ENCODE measurements at regions of chrX and their contacts with region 1.

Region 1: DNA sequence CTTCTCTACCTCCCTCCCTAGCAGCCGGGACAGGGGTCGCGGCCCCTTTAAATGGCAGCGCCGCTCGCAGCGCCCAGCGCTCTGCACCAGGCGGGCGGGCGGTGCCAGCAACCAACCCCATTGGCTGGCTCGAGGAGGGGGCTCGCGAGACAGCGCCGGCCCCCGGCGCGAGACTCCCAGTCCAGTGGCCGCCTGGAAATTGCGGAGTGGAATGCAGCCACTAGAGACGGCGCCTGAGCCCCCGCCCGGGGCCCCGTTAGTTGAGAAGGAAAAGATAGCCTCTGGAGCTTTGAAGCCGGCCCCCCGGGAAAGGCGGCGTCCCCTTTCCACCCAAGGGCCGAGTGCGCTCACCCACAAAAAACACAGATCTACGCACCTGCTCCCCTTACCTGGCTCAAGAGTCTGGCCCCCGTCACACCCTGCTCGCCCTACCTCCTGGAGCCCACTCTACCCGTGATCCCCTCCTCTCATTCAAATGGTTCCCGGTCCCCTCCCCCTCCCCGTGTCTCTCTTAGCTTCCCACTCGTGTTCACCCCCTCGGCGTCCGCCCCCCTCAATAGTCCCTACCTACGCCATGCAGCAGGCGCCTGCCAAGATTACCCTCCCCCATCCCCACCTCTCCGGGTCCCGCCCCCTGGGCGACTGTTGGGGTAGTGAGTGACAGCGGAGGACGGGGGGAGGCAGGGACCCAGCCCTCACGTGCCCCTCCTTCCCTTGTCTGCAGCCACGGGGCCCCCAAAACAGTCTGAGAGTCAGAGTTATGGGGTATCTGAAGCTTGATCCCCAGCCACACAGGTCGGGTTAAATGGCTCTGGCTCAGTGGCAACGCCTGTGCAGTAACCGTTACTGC is at the start of gene ZMYM3:
- DNase-seq: peak; percentile 64
- ATAC-seq: peak; percentile 85
- H3K4me3 Mint-ChIP-seq: peak within 1 kb of the TSS; percentile 93
- H3K27ac Mint-ChIP-seq: peak within 1 kb of the TSS; percentile 87
- H3K4me1 Mint-ChIP-seq: peaks cover 21% of the 10 kb centered on the region
- H3K27me3 Mint-ChIP-seq: no peaks in the 10 kb centered on the region
- CTCF ChIP-seq: no peak
- total RNA-seq, gene ZMYM3: 27.9 and 28.2 TPM in 2 replicates

Region 2: GRCh38 chrX:71111141-71111843 is 143.0 kb before region 1 on chrX and contains the start of gene IL2RG:
- CTCF ChIA-PET with region 1: no interaction called
- POLR2A ChIA-PET with region 1: interaction called, 11 read pairs
- intact Hi-C with region 1: no loop called
- DNase-seq: peak; percentile 37
- ATAC-seq: peak; percentile 90
- H3K4me3 Mint-ChIP-seq: peak within 1 kb of the TSS; percentile 95
- H3K27ac Mint-ChIP-seq: peak within 1 kb of the TSS; percentile 99
- H3K4me1 Mint-ChIP-seq: peaks cover 67% of the 10 kb centered on the region
- H3K27me3 Mint-ChIP-seq: no peaks in the 10 kb centered on the region
- CTCF ChIP-seq: no peak
- total RNA-seq, gene IL2RG: 261 and 264 TPM in 2 replicates

Region 3: GRCh38 chrX:71198066-71198465 is 56.3 kb before region 1 on chrX:
- CTCF ChIA-PET with region 1: no interaction called
- POLR2A ChIA-PET with region 1: interaction called, 26 read pairs
- intact Hi-C with region 1: loop called (anchors 1 kb)
- DNase-seq: peak; percentile 13
- ATAC-seq: peak; percentile 84
- H3K4me3 Mint-ChIP-seq: peak overlapping the region; percentile 95
- H3K27ac Mint-ChIP-seq: peak overlapping the region; percentile 95
- H3K4me1 Mint-ChIP-seq: peaks cover 32% of the 10 kb centered on the region
- H3K27me3 Mint-ChIP-seq: no peaks in the 10 kb centered on the region
- CTCF ChIP-seq: no peak

Region 4: DNA sequence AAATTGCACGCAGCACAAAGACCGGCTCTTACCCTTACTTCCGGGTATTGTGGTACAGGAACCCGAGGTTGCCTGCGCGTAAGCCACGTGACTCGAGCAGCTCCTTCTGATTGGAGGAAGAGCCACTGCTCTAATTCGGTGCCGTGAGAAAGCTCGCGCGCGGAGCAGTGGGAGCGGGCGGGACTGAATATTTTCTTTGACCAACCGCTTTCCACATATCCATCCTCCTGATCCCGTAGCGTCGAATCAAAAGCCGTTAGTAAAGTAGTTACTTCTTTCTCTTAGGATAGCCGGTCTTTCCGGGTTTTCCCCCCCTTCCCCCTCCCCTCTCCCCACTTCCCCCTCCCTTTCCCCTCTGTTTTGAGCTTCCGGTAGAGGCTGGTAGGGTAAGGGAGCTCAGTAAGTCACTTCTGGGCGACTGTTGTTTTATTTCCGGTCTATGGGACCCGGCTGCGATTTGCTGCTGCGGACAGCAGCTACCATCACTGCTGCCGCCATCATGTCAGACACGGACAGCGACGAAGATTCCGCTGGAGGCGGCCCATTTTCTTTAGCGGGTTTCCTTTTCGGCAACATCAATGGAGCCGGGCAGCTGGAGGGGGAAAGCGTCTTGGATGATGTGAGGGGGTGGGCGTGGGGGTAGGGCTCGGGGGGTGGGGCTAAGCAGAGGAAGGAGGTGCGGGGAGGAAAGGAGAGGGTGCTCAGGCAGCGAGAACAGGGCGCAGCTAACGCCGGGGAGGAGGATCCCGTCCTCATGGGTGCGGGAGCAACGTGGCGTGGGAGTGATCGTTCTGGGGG is 111.8 kb after region 1 on chrX and contains the start of gene TAF1:
- CTCF ChIA-PET with region 1: no interaction called
- POLR2A ChIA-PET with region 1: interaction called, 52 read pairs
- intact Hi-C with region 1: loop called (anchors 1 kb)
- DNase-seq: peak; percentile 69
- ATAC-seq: peak; percentile 87
- H3K4me3 Mint-ChIP-seq: peak within 1 kb of the TSS; percentile 99
- H3K27ac Mint-ChIP-seq: peak within 1 kb of the TSS; percentile 99
- H3K4me1 Mint-ChIP-seq: peaks cover 21% of the 10 kb centered on the region
- H3K27me3 Mint-ChIP-seq: no peaks in the 10 kb centered on the region
- CTCF ChIP-seq: no peak
- total RNA-seq, gene TAF1: 64.0 and 70.0 TPM in 2 replicates

Region 5: DNA sequence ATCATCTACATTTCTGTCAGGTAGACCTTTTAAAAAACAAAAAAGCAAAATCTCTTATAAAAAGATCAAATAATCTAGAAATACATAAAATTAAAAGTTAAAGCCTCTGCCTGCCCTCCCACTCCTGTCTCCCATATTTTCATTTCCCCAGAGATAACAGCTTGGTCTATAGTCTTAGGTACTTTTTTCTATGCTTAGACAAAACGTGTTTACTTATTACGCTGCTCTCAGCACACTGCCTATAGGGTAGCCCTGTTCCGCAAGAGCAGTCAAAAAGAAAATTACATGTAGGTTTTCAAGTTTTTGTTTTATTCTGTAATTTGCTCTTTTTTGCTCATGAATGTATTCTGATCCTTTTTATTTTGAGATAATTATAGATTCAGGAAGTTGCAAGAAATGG is 185.1 kb after region 1 on chrX:
- CTCF ChIA-PET with region 1: no interaction called
- POLR2A ChIA-PET with region 1: no interaction called
- intact Hi-C with region 1: no loop called
- DNase-seq: no peak
- ATAC-seq: no peak
- H3K4me3 Mint-ChIP-seq: no peak overlapping the region
- H3K27ac Mint-ChIP-seq: peak overlapping the region; percentile 50
- H3K4me1 Mint-ChIP-seq: peaks cover 17% of the 10 kb centered on the region
- H3K27me3 Mint-ChIP-seq: no peaks in the 10 kb centered on the region
- CTCF ChIP-seq: no peak

Region 6: GRCh38 chrX:72306851-72307645 is 1052.7 kb after region 1 on chrX:
- CTCF ChIA-PET with region 1: no interaction called
- POLR2A ChIA-PET with region 1: no interaction called
- intact Hi-C with region 1: loop called (anchors 5 kb)
- DNase-seq: peak; percentile 21
- ATAC-seq: peak; percentile 67
- H3K4me3 Mint-ChIP-seq: peak overlapping the region; percentile 86
- H3K27ac Mint-ChIP-seq: peak overlapping the region; percentile 46
- H3K4me1 Mint-ChIP-seq: peaks cover 37% of the 10 kb centered on the region
- H3K27me3 Mint-ChIP-seq: peaks cover 26% of the 10 kb centered on the region
- CTCF ChIP-seq: no peak